Activated CD8-positive, alpha-beta T cell treated with anti-CD3 and anti-CD28 coated beads, Interleukin-2, amount 10 ng/mL, durations not matched to agents 7 days and 5 days (primary cell): ENCODE measurements at regions of chrX and their contacts with region 1.

Region 1: DNA sequence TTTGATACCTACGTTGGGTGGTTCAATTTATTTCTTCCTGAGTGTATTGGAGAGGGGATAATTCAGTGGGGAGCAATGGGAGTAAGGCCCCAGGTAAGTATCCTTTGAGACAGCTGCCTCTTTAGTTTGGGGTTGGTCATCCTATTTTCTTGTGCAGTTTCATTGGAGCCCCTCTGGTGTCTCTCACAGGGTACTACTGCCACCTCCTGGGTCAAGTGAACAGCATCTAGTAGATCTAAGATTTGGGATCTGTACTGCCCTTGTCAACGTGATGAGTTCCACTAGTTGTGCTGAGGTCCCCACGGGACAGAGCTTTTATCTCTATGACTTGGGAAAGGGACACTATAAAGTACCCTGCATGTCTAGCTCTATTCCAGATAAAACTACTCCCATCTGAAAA is 80.6 kb downstream of the PBDC1 start:
- DNase-seq: peak; percentile 56
- ATAC-seq: peak; percentile 67
- H3K4me3 Mint-ChIP-seq: no peak overlapping the region
- H3K27ac Mint-ChIP-seq: no peak overlapping the region
- H3K4me1 Mint-ChIP-seq: no peaks in the 10 kb centered on the region
- H3K27me3 Mint-ChIP-seq: peaks cover 4% of the 10 kb centered on the region

Region 2: DNA sequence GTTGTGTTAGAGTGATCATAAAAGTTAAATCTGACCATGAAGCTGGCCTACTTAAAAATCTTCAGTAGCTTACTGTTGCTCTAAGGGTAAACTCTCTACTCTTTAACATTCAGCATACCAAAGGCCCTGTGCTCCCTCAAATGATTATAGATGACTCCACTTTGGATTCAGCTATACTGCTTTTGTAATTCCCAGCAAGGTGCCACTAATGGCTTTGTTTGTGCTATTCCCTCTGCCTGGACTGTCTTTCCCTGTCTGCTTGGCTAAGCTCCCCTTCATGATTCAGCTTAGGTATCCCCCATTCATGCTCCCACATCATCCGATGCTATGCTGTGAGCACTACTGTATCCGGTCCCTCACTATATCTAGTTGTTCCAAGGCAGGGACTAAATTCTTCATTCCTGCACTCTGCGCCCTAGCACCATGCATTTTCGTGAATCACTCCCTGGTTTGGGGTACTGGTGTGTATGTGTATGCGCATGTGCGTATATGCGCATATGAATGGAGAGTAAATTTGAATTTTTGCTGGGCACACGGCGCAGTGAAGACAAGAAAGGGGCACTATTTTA is 81.0 kb before region 1 on chrX:
- CTCF ChIA-PET with region 1: interaction called, 11 read pairs
- POLR2A ChIA-PET with region 1: no interaction called
- DNase-seq: no peak
- ATAC-seq: peak; percentile 48
- H3K4me3 Mint-ChIP-seq: peak overlapping the region; percentile 88
- H3K27ac Mint-ChIP-seq: peak overlapping the region; percentile 95
- H3K4me1 Mint-ChIP-seq: peaks cover 53% of the 10 kb centered on the region
- H3K27me3 Mint-ChIP-seq: no peaks in the 10 kb centered on the region

Region 3: GRCh38 chrX:76420237-76420636 is 166.8 kb after region 1 on chrX:
- CTCF ChIA-PET with region 1: no interaction called
- POLR2A ChIA-PET with region 1: no interaction called
- DNase-seq: no peak
- ATAC-seq: no peak
- H3K4me3 Mint-ChIP-seq: no peak overlapping the region
- H3K27ac Mint-ChIP-seq: no peak overlapping the region
- H3K4me1 Mint-ChIP-seq: peaks cover 3% of the 10 kb centered on the region
- H3K27me3 Mint-ChIP-seq: peaks cover 2% of the 10 kb centered on the region